Brain microvascular endothelial cell (primary cell): ENCODE measurements at regions of chr10 and their contacts with region 1.

Region 1: DNA sequence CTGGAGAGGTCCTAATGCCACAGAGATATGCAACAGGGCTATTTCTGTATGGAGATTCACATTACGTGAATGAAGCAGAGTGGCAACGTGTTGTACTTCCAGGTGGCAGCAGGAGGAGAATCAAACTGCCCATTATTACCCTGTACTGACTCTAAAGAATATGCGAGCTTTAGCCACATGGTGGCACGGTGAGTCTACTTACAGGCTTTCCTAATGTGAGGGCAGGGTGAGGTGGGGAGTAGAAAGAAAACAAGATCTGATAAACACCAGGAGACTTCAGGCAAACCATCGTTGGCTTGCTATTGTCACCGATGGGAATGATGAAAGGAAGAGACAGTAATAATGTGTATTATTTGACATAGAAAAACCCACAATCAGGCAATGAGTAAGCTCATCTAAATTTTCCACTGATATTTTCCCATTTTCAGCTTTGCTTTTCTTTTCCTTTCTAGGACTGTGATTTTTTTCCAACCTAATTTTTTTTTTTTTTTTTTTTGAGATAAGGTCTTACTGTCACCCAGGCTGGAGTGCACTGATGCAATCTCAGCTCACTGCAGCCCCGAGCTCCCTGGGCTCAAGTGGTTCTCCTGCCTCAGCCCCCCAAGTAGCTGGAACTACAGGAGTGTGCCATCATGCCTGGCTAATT is 164.3 kb downstream of the BTAF1 start:
- DNase-seq: peak; percentile 79
- H3K4me3 ChIP-seq: no peak overlapping the region
- H3K27ac ChIP-seq: no peak overlapping the region
- H3K27me3 ChIP-seq: no peaks in the 10 kb centered on the region
- CTCF ChIP-seq: peak; percentile 86

Region 2: DNA sequence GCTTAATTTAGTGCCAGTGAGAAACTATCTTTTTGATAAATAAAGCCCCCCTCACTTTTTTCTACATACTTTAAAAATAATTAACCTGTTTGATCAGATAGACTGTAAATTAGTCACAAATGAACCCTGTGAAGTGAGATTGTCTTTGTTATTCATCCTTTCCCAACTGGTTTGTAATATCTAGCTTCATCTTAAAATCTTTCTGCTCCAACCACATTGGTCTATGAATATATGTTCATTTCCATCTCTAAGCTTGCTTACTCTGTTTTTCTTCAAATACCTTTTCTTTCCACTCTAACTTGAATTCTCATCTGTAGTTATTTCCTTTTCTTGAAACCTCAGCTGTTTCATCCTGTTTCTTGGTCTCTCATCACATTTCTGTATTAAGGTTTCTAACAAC is 215.2 kb after region 1 on chr10:
- in situ Hi-C with region 1: no loop called
- DNase-seq: no peak
- H3K4me3 ChIP-seq: no peak overlapping the region
- H3K27ac ChIP-seq: no peak overlapping the region
- H3K27me3 ChIP-seq: no peaks in the 10 kb centered on the region
- CTCF ChIP-seq: no peak

Region 3: GRCh38 chr10:92419740-92420545 is 332.1 kb after region 1 on chr10:
- in situ Hi-C with region 1: loop called (anchors 25 kb)
- DNase-seq: peak; percentile 17
- H3K4me3 ChIP-seq: peak overlapping the region; percentile 37
- H3K27ac ChIP-seq: no peak overlapping the region
- H3K27me3 ChIP-seq: no peaks in the 10 kb centered on the region
- CTCF ChIP-seq: peak; percentile 79